ENCODE measurements at regions of chr5 and their contacts with region 1.

Region 1: DNA sequence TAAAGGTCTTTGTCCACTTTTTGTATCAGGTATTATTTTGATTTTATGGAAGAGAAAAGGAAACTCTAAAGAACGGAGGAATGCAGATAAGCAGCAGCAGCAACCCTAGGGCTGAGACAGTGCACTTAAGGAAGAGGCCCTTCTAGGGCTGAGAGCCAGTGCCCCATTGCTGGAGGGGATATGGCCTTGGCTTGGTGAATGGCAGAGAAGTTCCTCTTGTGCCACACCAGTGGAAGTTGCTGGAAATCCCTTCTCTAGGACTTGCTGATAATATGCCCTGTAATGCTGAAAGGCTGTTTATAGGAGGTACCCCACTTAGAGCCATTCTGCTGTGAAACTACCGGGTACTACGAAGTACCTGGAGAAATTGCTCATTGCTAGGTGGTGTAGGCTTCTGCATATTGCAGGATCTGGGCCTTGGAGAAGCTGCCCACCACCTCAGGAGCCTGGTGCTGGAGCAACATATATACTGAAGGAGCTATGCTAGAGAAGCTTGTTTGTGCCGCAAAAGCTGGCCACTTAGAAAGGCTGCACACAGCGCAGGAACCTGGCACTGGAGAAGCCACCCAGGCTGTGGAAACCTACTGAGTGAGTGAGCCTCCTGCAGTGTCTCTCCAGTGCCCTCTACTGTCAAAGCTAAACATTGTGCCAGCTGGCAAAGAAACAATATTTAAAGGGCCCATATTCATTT is 9.6 kb upstream of the UBTD2 start:
- DNase-seq: peak; percentile 58
- H3K4me3 ChIP-seq: no peak overlapping the region
- H3K27ac ChIP-seq: no peak overlapping the region
- H3K4me1 ChIP-seq: no peaks in the 10 kb centered on the region
- H3K27me3 ChIP-seq: no peaks in the 10 kb centered on the region
- CTCF ChIP-seq: peak; percentile 91 to 94

Region 2: DNA sequence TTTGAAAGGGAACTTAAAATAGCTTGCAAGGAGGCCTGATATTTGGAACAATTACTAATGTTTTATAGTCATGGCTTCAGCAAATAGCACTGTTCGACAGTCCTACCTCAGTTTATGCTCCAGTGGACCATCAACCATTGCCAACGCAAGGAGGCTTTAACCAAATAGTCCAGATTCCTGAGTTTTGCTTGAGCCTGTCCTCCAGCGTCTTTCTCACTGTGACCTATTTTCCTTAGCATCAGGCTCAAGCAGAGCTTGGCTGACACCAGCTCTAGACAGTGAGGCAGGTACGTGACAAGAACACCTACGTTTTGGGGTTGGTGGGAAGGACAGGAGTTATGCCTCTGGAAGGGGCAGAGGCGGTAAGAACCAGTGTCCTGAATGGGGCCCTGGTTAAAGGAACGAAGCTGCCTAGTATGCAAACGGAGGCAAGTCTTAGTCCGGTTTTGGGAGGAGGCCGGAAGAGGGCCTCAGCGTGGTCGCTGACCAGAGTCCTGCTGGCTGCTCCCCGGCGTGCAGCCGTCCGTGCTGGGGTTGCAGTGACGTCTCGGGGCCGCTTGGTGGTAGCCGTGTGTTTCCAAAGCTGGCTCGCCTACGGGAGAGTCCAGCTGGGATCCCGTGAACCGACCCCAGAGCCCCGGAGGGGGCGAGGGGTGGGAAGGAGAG is 874.8 kb before region 1 on chr5:
- CTCF ChIA-PET with region 1: no interaction called
- dilution Hi-C with region 1: no loop called
- in situ Hi-C with region 1: no loop called
- intact Hi-C with region 1: loop called (anchors 5 kb)
- DNase-seq: peak; percentile 70
- H3K4me3 ChIP-seq: peak overlapping the region in 1 of 3 experiments; percentile 31
- H3K27ac ChIP-seq: no peak overlapping the region
- H3K4me1 ChIP-seq: peaks cover 15% of the 10 kb centered on the region
- H3K27me3 ChIP-seq: peaks cover 8% of the 10 kb centered on the region
- CTCF ChIP-seq: peak; percentile 77 to 89

Region 3: GRCh38 chr5:171992815-171993214 is 300.4 kb before region 1 on chr5:
- CTCF ChIA-PET with region 1: no interaction called
- dilution Hi-C with region 1: no loop called
- in situ Hi-C with region 1: no loop called
- intact Hi-C with region 1: no loop called
- DNase-seq: no peak
- H3K4me3 ChIP-seq: no peak overlapping the region
- H3K27ac ChIP-seq: no peak overlapping the region
- H3K4me1 ChIP-seq: no peaks in the 10 kb centered on the region
- H3K27me3 ChIP-seq: no peaks in the 10 kb centered on the region
- CTCF ChIP-seq: no peak

Region 4: DNA sequence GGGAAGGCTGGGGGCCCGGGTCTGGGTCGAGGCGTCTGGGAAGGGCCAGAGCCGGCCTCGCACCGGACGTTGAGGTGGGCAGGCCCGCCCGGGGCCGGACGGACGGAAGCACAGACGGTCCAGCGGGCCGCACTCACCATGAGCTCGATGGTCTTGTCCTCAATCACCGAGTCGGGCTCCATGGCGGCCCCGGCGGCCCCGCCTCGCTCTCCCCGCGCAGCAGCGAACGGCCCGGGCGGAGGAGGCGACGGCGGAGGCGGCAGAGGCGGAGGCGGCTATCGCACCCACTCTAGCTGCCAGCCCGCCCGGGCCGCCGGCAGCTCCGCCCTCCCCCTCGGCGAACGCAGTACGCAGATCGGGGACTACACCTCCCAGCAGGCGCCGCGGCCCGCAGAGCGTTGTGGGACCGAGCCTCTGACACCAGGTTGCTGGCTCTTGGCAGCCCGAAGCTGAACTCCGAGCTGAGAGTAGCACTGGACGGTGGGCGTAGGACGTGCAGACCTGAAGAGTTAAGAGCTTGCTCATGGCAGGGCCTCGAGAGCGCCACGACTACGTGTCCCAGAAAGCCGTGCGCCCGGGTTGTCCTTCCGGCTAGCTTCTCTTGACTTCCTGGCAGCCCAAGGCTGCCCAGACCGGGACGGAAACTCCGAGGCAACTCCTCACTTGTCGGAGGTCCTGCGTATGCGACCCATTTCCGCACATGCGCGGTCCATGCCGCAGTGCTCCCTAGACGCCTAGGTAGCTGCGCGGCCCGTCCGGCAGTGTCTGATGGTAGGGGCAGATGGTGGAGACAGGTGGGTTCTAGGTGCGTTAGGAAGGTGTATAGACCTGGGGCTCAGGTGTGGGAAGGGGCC is 286.7 kb before region 1 on chr5 and contains the start of gene FBXW11:
- CTCF ChIA-PET with region 1: no interaction called
- dilution Hi-C with region 1: no loop called
- in situ Hi-C with region 1: no loop called
- intact Hi-C with region 1: loop called (anchors 2 kb)
- DNase-seq: peak; percentile 97
- H3K4me3 ChIP-seq: peak within 1 kb of the TSS; percentile 73 to 98 (median 77)
- H3K27ac ChIP-seq: peak within 1 kb of the TSS; percentile 88
- H3K4me1 ChIP-seq: peaks cover 54% of the 10 kb centered on the region
- H3K27me3 ChIP-seq: no peaks in the 10 kb centered on the region
- CTCF ChIP-seq: no peak
- total RNA-seq, gene FBXW11: 39.2 to 62.0 TPM

Region 5: DNA sequence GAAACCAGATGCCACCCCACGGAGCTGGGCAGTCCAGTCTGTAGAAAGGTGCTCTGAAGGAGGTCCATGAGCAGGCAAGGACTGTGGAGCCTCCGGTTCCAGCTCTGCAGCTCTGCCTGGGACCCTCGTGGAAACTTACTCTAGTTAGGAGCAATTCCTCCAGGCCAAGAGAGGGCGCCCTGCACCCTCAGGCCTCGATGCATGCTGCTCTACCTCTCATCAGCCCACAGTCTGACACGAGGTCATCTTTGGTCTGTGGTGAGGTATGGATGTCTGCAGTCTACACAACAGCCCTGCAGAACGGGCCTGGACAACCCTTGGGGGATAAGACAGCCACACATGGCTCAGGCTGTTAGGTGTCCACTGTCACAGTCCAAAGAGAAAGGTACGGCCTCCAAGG is 41.0 kb after region 1 on chr5:
- CTCF ChIA-PET with region 1: no interaction called
- dilution Hi-C with region 1: no loop called
- in situ Hi-C with region 1: no loop called
- intact Hi-C with region 1: no loop called
- DNase-seq: no peak
- H3K4me3 ChIP-seq: no peak overlapping the region
- H3K27ac ChIP-seq: no peak overlapping the region
- H3K4me1 ChIP-seq: no peaks in the 10 kb centered on the region
- H3K27me3 ChIP-seq: no peaks in the 10 kb centered on the region
- CTCF ChIP-seq: no peak

Region 6: GRCh38 chr5:172370648-172371545 is 77.7 kb after region 1 on chr5:
- CTCF ChIA-PET with region 1: no interaction called
- dilution Hi-C with region 1: no loop called
- in situ Hi-C with region 1: no loop called
- intact Hi-C with region 1: loop called (anchors 2 kb)
- DNase-seq: peak; percentile 45
- H3K4me3 ChIP-seq: no peak overlapping the region
- H3K27ac ChIP-seq: no peak overlapping the region
- H3K4me1 ChIP-seq: peaks cover 4% of the 10 kb centered on the region
- H3K27me3 ChIP-seq: no peaks in the 10 kb centered on the region
- CTCF ChIP-seq: peak; percentile 66 to 91

Region 7: DNA sequence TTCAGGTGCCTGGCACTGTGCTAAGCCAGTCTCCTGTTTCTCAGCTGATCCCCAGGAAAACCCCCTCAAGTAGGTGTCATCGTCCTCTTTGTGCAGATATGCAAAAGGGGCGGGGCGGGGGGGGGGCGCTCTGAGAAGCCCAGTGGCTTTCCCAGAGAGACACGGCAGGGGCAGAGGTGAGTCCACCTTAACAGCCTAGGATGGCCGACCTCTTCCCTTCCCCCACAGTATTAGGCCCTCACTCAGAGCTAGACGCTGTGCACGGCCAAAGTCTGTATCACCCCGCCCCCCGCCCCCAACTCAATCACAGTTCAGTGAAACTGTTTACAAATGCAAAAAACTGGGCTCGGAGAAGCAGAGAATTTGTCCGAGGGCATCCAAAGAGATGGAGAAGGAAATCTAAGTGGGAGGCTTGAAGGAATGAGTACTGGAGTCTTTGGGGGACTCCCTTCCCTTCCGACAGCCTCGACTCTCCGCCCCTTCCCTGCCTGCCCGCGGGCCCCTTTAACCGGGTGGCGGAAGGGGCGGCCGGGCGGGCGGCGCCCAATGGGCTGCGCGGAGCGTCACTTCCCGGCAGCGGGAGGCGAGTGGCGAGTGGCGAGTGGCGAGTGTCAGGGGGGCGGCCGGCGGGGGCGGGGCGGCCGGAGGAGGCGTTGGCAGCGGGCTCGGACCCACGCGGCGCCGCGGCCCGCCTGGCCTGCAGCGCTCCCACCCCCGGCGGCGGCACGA is 540.7 kb after region 1 on chr5 and contains the start of gene ERGIC1:
- CTCF ChIA-PET with region 1: interaction called, 11 read pairs
- dilution Hi-C with region 1: no loop called
- in situ Hi-C with region 1: no loop called
- intact Hi-C with region 1: no loop called
- DNase-seq: peak; percentile 78
- H3K4me3 ChIP-seq: peak within 1 kb of the TSS; percentile 73 to 87 (median 82)
- H3K27ac ChIP-seq: peak within 1 kb of the TSS; percentile 72
- H3K4me1 ChIP-seq: peaks cover 8% of the 10 kb centered on the region
- H3K27me3 ChIP-seq: no peaks in the 10 kb centered on the region
- CTCF ChIP-seq: no peak
- total RNA-seq, gene ERGIC1: 58.8 to 98.6 TPM

Measured in mammary epithelial cell (primary cell).